ENCODE measurements at regions of chr1 and their contacts with region 1.

Region 1: GRCh38 chr1:73674945-73675561 is 522.9 kb downstream of the LRRIQ3 start:
- DNase-seq: peak; percentile 14
- H3K4me3 ChIP-seq: peak overlapping the region in 1 of 2 experiments; percentile 56; a peak in 1 of 4 replicates
- H3K27ac ChIP-seq: no peak overlapping the region
- H3K4me1 ChIP-seq: no peaks in the 10 kb centered on the region; a peak in 1 of 4 replicates
- H3K27me3 ChIP-seq: no peaks in the 10 kb centered on the region
- CTCF ChIP-seq: peak; percentile 58
- EP300 ChIP-seq: no peak
- RAD21 ChIP-seq: peak; percentile 62

Region 2: GRCh38 chr1:72724951-72725861 is 949.8 kb before region 1 on chr1:
- CTCF ChIA-PET with region 1: interaction called, 12 read pairs
- POLR2A ChIA-PET with region 1: no interaction called
- DNase-seq: peak; percentile 16
- H3K4me3 ChIP-seq: no peak overlapping the region
- H3K27ac ChIP-seq: no peak overlapping the region
- H3K4me1 ChIP-seq: no peaks in the 10 kb centered on the region; a peak in 1 of 4 replicates
- H3K27me3 ChIP-seq: no peaks in the 10 kb centered on the region
- CTCF ChIP-seq: no peak
- EP300 ChIP-seq: no peak
- RAD21 ChIP-seq: peak; percentile 70